Activated naive CD4-positive, alpha-beta T cell treated with anti-CD3 and anti-CD28 coated beads, Interleukin-2, amount 10 ng/mL, durations not matched to agents 7 days and 5 days (primary cell): ENCODE measurements at regions of chr2 and their contacts with region 1.

Region 1: GRCh38 chr2:6896930-6897759 is 19.6 kb downstream of the RSAD2 start:
- DNase-seq: no peak
- H3K4me3 Mint-ChIP-seq: no peak overlapping the region
- H3K27ac Mint-ChIP-seq: no peak overlapping the region
- H3K4me1 Mint-ChIP-seq: peaks cover 23% of the 10 kb centered on the region
- H3K27me3 Mint-ChIP-seq: no peaks in the 10 kb centered on the region

Region 2: DNA sequence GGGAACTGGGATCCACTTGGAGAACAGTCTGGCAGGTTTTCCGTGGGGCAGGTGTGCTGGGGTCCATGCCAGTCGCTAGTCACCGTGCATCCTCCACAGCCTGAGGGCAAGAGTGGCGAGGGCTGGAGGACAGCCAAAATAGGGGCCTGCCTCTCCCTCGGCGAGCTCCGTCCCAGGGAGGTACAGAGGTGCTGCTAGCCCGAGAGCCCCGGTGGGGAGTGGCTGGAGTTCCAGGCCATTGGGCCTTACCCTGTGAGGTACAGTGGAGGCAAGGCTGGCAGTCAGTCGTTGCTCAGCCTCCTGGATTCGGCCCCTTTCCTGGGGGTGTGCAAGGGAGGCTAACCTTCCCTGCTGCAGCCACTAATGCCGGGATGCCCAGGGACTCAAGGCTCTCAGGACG is 438.0 kb before region 1 on chr2:
- CTCF ChIA-PET with region 1: no interaction called
- DNase-seq: no peak
- H3K4me3 Mint-ChIP-seq: no peak overlapping the region
- H3K27ac Mint-ChIP-seq: no peak overlapping the region
- H3K4me1 Mint-ChIP-seq: no peaks in the 10 kb centered on the region
- H3K27me3 Mint-ChIP-seq: no peaks in the 10 kb centered on the region

Region 3: GRCh38 chr2:6909431-6910385 is 12.6 kb after region 1 on chr2:
- CTCF ChIA-PET with region 1: interaction called, 36 read pairs
- DNase-seq: peak; percentile 72
- H3K4me3 Mint-ChIP-seq: peak overlapping the region; percentile 60
- H3K27ac Mint-ChIP-seq: peak overlapping the region; percentile 98
- H3K4me1 Mint-ChIP-seq: peaks cover 91% of the 10 kb centered on the region
- H3K27me3 Mint-ChIP-seq: no peaks in the 10 kb centered on the region

Region 4: GRCh38 chr2:6917071-6917760 is 20.1 kb after region 1 on chr2 and contains the start of gene RNF144A:
- CTCF ChIA-PET with region 1: interaction called, 36 read pairs
- DNase-seq: peak; percentile 73
- H3K4me3 Mint-ChIP-seq: peak within 1 kb of the TSS; percentile 77
- H3K27ac Mint-ChIP-seq: peak within 1 kb of the TSS; percentile 86
- H3K4me1 Mint-ChIP-seq: peaks cover 79% of the 10 kb centered on the region
- H3K27me3 Mint-ChIP-seq: peaks cover 8% of the 10 kb centered on the region

Region 5: DNA sequence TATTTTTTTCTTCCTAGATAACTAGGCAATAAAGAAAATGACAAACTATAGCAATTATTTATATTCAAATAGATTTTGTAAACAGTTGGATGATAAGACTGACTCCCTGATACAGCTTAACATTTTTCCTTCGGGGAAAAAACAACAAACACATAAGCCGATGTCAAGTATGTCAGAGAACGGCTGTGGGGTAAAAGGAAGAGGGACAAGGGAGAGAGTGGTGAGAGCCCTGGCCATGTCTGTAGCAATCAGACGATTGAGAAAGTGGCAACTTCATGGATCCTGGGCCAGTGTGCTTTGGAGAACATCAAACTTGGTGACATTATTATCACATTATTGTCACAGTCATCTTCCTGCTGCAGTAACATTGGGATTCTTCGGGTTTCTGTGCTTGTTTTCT is 85.3 kb after region 1 on chr2:
- CTCF ChIA-PET with region 1: no interaction called
- DNase-seq: no peak
- H3K4me3 Mint-ChIP-seq: no peak overlapping the region
- H3K27ac Mint-ChIP-seq: no peak overlapping the region
- H3K4me1 Mint-ChIP-seq: peaks cover 5% of the 10 kb centered on the region
- H3K27me3 Mint-ChIP-seq: no peaks in the 10 kb centered on the region